CD8-positive, alpha-beta T cell (primary cell): ENCODE measurements at regions of chr15 and their contacts with region 1.

Region 1: DNA sequence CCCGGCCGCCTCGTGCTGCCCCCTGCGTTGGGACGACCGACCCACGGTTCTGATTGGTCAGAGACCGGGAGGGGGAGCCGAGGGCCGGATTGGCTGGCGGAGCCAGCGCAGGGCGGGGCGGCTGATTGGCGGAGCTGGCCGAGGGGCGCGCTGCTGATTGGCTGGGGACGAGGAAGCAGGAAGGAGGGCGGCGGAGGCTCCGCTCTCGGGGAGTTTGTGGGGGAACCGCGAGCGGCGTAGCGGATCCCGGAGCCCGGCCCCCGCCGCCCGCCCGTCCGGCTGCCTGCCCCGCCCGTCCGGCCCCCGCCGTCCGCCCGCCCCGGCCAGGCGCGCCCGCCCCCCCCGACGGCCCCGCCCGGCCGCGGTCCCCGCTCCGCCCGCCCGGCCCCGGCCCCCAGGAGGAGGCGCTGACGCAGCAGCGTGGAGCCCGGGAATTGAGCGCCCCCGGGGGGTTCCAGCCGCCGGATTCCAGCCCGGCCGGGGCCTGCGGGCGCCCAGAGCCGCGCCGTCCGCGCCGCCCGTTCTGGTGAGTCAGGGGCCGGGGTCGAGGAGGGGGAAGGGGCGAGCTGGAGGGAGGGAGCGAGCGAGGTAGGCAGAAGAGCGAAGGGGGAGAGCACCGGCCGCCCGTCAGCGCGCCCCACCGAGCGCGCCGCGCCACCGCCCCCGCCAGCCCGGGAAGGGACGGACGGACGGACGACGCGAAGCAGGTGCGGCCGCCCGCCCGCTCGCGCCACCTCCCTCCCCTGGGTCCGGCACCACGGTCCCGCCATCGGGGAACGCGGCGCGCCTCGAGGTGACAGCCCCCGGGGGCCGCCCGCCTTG is at the start of gene BAHD1:
- DNase-seq: peak; percentile 86 to 97 (median 95)
- ATAC-seq: peak; percentile 85
- H3K4me3 ChIP-seq: peak within 1 kb of the TSS; percentile 57 to 60
- H3K4me3 Mint-ChIP-seq: peak within 1 kb of the TSS; percentile 91
- H3K27ac ChIP-seq: peak within 1 kb of the TSS in 1 of 2 experiments; percentile 53
- H3K27ac Mint-ChIP-seq: peak within 1 kb of the TSS; percentile 75
- H3K4me1 ChIP-seq: peaks cover 57% of the 10 kb centered on the region
- H3K4me1 Mint-ChIP-seq: peaks cover 58% of the 10 kb centered on the region
- H3K27me3 ChIP-seq: peaks cover 10 to 13% of the 10 kb centered on the region in 2 experiments
- H3K27me3 Mint-ChIP-seq: peaks cover 12% of the 10 kb centered on the region
- CTCF ChIP-seq: no peak
- total RNA-seq, gene BAHD1: 22.2 to 23.7 TPM

Region 2: DNA sequence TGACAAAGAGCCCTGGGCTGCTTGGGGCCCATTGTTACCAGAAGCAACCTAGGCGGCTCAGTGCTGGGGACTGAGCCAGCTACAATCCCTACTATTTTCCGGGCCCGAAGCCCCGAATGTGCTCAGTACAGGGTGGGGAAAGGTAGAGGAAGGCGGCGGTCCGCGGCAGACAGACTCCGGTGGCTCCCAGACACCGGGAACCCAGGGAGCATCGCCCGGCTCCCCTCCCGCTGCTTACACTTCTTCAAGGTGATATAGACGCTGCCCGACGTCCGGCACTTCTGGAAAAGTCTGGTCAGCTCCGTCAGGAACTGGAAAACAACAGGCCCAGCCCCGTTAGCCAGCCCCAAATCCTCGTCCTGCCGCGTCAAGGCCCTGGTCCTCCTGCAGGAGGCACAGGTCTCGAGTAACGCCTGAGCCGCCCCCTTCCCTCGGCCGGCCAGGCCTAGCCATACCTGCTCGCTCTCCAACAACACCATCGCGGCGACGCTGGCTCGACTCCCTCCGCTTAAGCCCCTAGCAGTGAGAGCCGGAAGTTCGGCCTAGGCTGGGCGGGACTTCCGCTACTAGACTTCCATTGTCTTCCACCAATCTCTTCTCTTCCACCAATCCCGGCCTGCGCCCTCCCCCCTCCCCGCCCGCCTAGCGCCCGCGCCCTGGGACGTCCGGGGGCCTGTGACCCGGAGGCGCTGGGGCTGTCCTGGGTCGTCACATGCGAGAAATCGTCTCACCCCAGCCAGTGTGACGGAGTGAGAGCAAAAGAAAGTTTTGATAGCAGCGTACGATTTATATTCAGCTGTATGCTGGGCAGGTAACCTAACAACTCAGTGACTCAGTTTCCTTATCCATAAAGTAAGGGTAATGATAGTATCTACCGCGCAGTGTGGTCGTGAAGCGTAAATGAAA is 402.1 kb before region 1 on chr15 and contains the start of gene SRP14:
- CTCF ChIA-PET with region 1: no interaction called
- POLR2A ChIA-PET with region 1: no interaction called
- intact Hi-C with region 1: loop called in 1 of 2 experiments (anchors 10 kb)
- DNase-seq: peak; percentile 86 to 96 (median 93)
- ATAC-seq: peak; percentile 94
- H3K4me3 ChIP-seq: peak within 1 kb of the TSS; percentile 92 to 99
- H3K4me3 Mint-ChIP-seq: peak within 1 kb of the TSS; percentile 99
- H3K27ac ChIP-seq: peak within 1 kb of the TSS; percentile 84 to 96
- H3K27ac Mint-ChIP-seq: peak within 1 kb of the TSS; percentile 99
- H3K4me1 ChIP-seq: peaks cover 16% of the 10 kb centered on the region
- H3K4me1 Mint-ChIP-seq: peaks cover 43% of the 10 kb centered on the region
- H3K27me3 ChIP-seq: no peaks in the 10 kb centered on the region
- H3K27me3 Mint-ChIP-seq: no peaks in the 10 kb centered on the region
- CTCF ChIP-seq: no peak
- total RNA-seq, gene SRP14: 133 to 135 TPM

Region 3: DNA sequence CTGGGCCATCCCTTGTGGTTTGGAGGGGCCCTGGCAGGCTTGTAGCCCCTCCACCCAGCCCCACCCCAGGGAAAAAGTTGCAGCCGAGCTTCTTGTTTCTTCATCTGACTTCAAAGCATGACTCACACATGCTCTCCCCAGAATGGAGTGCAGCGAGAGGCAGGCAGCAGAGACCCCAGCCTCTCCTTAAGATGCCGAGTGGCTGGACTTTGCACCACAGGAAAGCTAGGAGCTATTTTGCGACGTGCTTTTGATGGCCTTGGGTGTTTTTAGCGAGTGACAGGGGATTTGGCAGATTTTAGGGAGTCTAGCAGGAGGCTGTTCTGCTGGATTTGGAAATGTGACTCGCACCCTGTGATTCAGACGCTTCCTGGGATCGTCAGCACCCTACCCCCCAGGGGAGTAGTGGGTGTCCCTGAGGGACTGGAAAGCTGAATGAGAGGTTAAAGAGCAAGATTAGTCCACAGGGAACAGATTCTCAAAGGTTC is 14.0 kb after region 1 on chr15:
- CTCF ChIA-PET with region 1: interaction called, 9 read pairs
- POLR2A ChIA-PET with region 1: interaction called, 11 read pairs
- intact Hi-C with region 1: loop called in 1 of 2 experiments (anchors 1 kb)
- DNase-seq: peak in 4 of 9 experiments; percentile 24 to 55 (median 37)
- ATAC-seq: peak; percentile 38
- H3K4me3 ChIP-seq: no peak overlapping the region
- H3K4me3 Mint-ChIP-seq: peak overlapping the region; percentile 81
- H3K27ac ChIP-seq: peak overlapping the region; percentile 11 to 56
- H3K27ac Mint-ChIP-seq: peak overlapping the region; percentile 90
- H3K4me1 ChIP-seq: peaks cover 76% of the 10 kb centered on the region
- H3K4me1 Mint-ChIP-seq: peaks cover 71% of the 10 kb centered on the region
- H3K27me3 ChIP-seq: no peaks in the 10 kb centered on the region
- H3K27me3 Mint-ChIP-seq: no peaks in the 10 kb centered on the region
- CTCF ChIP-seq: no peak

Region 4: GRCh38 chr15:40470423-40471104 is 29.6 kb after region 1 on chr15 and contains the start of gene CHST14:
- CTCF ChIA-PET with region 1: interaction called, 4 read pairs
- POLR2A ChIA-PET with region 1: interaction called, 3 read pairs
- intact Hi-C with region 1: loop called (anchors 1 kb)
- DNase-seq: peak; percentile 19 to 78 (median 57)
- ATAC-seq: peak; percentile 86
- H3K4me3 ChIP-seq: peak within 1 kb of the TSS; percentile 77 to 88
- H3K4me3 Mint-ChIP-seq: peak within 1 kb of the TSS; percentile 89
- H3K27ac ChIP-seq: peak within 1 kb of the TSS; percentile 52 to 82
- H3K27ac Mint-ChIP-seq: peak within 1 kb of the TSS; percentile 85
- H3K4me1 ChIP-seq: peaks cover 25% of the 10 kb centered on the region
- H3K4me1 Mint-ChIP-seq: peaks cover 15% of the 10 kb centered on the region
- H3K27me3 ChIP-seq: no peaks in the 10 kb centered on the region
- H3K27me3 Mint-ChIP-seq: no peaks in the 10 kb centered on the region
- CTCF ChIP-seq: no peak
- total RNA-seq, gene CHST14: 3.7 to 4.1 TPM

Region 5: DNA sequence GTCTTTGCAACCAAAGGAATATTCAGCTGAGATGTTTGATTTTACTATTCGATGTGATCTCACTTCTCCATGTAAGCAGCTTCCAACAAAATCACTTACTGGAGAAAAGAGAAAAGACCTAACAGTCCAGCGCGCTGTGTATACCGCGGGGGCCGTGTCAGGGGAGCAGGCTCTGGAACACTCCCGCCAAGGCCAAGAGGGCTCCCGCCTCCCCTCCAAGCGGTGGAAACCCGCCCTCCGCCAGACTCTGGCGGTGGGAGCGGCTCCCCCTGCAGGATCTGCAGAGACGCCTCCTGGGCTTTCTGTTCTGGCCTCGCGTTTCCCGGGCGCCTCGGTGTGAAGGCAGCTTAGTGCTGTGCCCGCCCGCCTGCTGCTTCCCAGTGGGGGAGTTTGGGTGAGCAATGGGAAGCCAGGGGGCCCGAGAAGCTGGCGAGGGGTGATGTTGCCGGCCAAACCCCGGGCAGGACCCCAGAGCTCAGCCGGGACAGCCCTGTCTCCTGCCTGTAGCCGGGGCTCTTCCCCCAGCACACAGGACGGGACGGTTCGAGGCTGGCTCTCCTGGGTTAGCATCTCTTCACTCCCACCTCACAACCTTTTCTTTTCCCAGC is 66.1 kb after region 1 on chr15:
- CTCF ChIA-PET with region 1: interaction called, 17 read pairs
- POLR2A ChIA-PET with region 1: no interaction called
- intact Hi-C with region 1: loop called (anchors 1 kb)
- DNase-seq: peak; percentile 18 to 80 (median 65)
- ATAC-seq: peak; percentile 74
- H3K4me3 ChIP-seq: peak overlapping the region in 1 of 2 experiments; percentile 8
- H3K4me3 Mint-ChIP-seq: no peak overlapping the region
- H3K27ac ChIP-seq: no peak overlapping the region
- H3K27ac Mint-ChIP-seq: no peak overlapping the region
- H3K4me1 ChIP-seq: peaks cover 20% of the 10 kb centered on the region
- H3K4me1 Mint-ChIP-seq: peaks cover 22% of the 10 kb centered on the region
- H3K27me3 ChIP-seq: peaks cover 18 to 19% of the 10 kb centered on the region in 2 experiments
- H3K27me3 Mint-ChIP-seq: peaks cover 59% of the 10 kb centered on the region
- CTCF ChIP-seq: peak; percentile 61

Region 6: DNA sequence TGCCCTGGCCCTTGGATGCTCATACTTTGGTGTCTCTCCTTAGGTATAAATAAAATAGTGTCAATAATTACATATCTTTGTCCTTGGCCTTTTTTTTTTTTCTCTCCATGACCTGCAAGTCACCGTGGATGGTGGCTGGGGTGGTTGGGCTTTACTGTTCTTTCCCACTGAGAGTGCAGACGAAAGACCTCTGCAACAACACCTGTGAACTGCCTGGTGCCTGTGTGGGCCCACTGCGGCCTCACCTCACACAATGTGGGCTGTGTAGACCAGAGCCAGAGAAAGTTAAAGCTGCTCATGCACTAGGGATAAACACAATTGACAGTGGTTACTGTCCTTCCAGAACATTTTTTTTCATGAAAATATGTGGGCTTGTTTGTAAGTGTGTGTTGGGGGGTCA is 84.9 kb after region 1 on chr15:
- CTCF ChIA-PET with region 1: no interaction called
- POLR2A ChIA-PET with region 1: no interaction called
- intact Hi-C with region 1: loop called in 1 of 2 experiments (anchors 5 kb)
- DNase-seq: no peak
- ATAC-seq: no peak
- H3K4me3 ChIP-seq: no peak overlapping the region
- H3K4me3 Mint-ChIP-seq: no peak overlapping the region
- H3K27ac ChIP-seq: no peak overlapping the region
- H3K27ac Mint-ChIP-seq: no peak overlapping the region
- H3K4me1 ChIP-seq: no peaks in the 10 kb centered on the region
- H3K4me1 Mint-ChIP-seq: no peaks in the 10 kb centered on the region
- H3K27me3 ChIP-seq: no peaks in the 10 kb centered on the region
- H3K27me3 Mint-ChIP-seq: no peaks in the 10 kb centered on the region
- CTCF ChIP-seq: no peak

Region 7: GRCh38 chr15:40564591-40565332 is 123.8 kb after region 1 on chr15 and contains the start of gene CCDC32:
- CTCF ChIA-PET with region 1: interaction called, 3 read pairs
- POLR2A ChIA-PET with region 1: interaction called, 4 read pairs
- intact Hi-C with region 1: loop called (anchors 2 kb)
- DNase-seq: peak; percentile 84 to 99 (median 94)
- ATAC-seq: peak; percentile 90
- H3K4me3 ChIP-seq: peak within 1 kb of the TSS; percentile 89 to 97
- H3K4me3 Mint-ChIP-seq: peak within 1 kb of the TSS; percentile 95
- H3K27ac ChIP-seq: peak within 1 kb of the TSS; percentile 87 to 97
- H3K27ac Mint-ChIP-seq: peak within 1 kb of the TSS; percentile 97
- H3K4me1 ChIP-seq: peaks cover 11% of the 10 kb centered on the region
- H3K4me1 Mint-ChIP-seq: peaks cover 52% of the 10 kb centered on the region
- H3K27me3 ChIP-seq: no peaks in the 10 kb centered on the region
- H3K27me3 Mint-ChIP-seq: no peaks in the 10 kb centered on the region
- CTCF ChIP-seq: no peak
- total RNA-seq, gene CCDC32: 18.3 to 20.3 TPM

Region 8: DNA sequence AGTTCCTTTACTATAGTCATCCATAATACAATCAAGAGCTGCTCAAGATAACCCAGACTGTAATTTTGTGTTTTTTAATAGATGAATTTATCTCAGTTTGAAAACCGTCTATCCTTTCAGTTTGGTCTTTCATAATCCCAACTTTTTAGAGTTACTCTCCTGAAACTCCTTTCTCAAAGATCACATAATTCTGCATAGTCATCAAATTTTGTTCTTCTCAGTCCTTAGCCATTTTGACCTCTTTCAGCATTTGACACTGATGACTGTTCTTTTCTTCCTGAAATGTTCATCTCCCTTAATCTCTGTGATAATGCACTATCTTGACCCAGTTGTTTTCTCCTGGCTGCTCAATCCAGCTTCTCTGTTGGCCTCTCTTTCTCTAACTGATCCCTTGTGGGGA is 206.6 kb after region 1 on chr15:
- CTCF ChIA-PET with region 1: no interaction called
- POLR2A ChIA-PET with region 1: no interaction called
- intact Hi-C with region 1: no loop called
- DNase-seq: no peak
- ATAC-seq: no peak
- H3K4me3 ChIP-seq: no peak overlapping the region
- H3K4me3 Mint-ChIP-seq: no peak overlapping the region
- H3K27ac ChIP-seq: no peak overlapping the region
- H3K27ac Mint-ChIP-seq: no peak overlapping the region
- H3K4me1 ChIP-seq: no peaks in the 10 kb centered on the region
- H3K4me1 Mint-ChIP-seq: no peaks in the 10 kb centered on the region
- H3K27me3 ChIP-seq: no peaks in the 10 kb centered on the region
- H3K27me3 Mint-ChIP-seq: no peaks in the 10 kb centered on the region
- CTCF ChIP-seq: no peak